H1 (cell line): ENCODE measurements at regions of chr16 and their contacts with region 1.

Region 1: GRCh38 chr16:30874821-30875717 is 18.8 kb downstream of the BCL7C start:
- DNase-seq: peak in 1 of 2 experiments; percentile 94
- H3K4me3 ChIP-seq: peak overlapping the region; percentile 61 to 97 (median 92)
- H3K27ac ChIP-seq: peak overlapping the region; percentile 77
- H3K4me1 ChIP-seq: peaks cover 0 to 6% (median 3%) of the 10 kb centered on the region in 4 experiments; a peak in 5 of 7 replicates
- H3K27me3 ChIP-seq: peaks cover 0 to 26% (median 11%) of the 10 kb centered on the region in 4 experiments; a peak in 5 of 7 replicates
- CTCF ChIP-seq: peak in 1 of 3 experiments; percentile 11; a peak in 1 of 4 replicates
- EP300 ChIP-seq: 0 out of 3 replicates have a peak, but pooled peaks of 1 of the 2 experiments have one; percentile 44
- POLR2A ChIP-seq: peak; percentile 94 to 96
- RAD21 ChIP-seq: peak in 1 of 2 experiments; percentile 9; a peak in 1 of 4 replicates

Region 2: DNA sequence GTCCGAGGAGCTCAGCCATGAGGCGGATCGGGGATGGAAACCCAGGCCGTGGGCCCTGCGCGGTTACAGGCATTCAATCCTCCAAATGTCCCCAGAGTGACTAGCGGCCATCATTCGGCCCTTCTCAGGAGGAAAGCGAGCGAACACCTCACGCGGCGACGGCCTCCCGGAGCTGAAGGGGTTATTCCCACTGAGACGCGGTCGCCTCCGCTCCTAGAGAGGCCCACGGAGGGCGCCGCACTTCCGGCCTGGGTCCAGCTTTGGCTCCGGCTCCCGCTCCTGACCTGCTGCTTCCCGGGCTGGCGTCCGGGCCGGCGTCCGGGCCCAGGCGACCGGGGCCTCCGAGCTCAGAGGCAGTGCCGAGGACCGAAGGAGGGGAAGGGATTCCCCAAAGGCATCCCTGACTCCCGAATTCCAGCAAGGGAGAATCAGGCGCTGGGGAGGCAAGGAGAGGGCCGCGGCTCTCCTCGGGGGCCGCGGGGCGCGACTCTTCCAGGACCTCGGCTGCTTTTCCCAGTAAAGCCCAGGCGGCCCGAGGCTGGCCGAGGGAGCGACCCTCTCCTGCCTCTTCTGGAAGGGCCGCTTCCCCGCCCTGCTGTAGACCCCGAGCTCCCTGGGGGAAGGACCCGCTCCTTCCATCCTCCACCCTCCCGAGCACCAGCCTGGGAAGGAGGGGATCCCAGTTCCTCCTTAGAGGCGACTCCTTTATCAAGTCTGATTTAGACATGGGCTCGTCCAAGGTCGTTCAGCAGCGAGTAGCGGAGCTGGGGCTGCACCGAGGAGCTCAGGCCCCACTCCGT is 69.5 kb before region 1 on chr16:
- CTCF ChIA-PET with region 1: interaction called, 5 read pairs
- POLR2A ChIA-PET with region 1: interaction called, 27 read pairs
- DNase-seq: peak in 1 of 2 experiments; percentile 84
- H3K4me3 ChIP-seq: peak overlapping the region; percentile 60 to 78 (median 68)
- H3K27ac ChIP-seq: no peak overlapping the region
- H3K4me1 ChIP-seq: peaks cover 0 to 6% (median 4%) of the 10 kb centered on the region in 4 experiments; a peak in 4 of 7 replicates
- H3K27me3 ChIP-seq: peaks cover 0 to 18% (median 11%) of the 10 kb centered on the region in 4 experiments; a peak in 6 of 7 replicates
- CTCF ChIP-seq: no peak
- EP300 ChIP-seq: no peak; a peak in 1 of 3 replicates
- POLR2A ChIP-seq: peak in 1 of 2 experiments; percentile 86; a peak in 2 of 3 replicates
- RAD21 ChIP-seq: no peak

Region 3: GRCh38 chr16:30853758-30854157 is 21.3 kb before region 1 on chr16:
- CTCF ChIA-PET with region 1: interaction called, 5 read pairs
- POLR2A ChIA-PET with region 1: interaction called, 14 read pairs
- DNase-seq: no peak
- H3K4me3 ChIP-seq: no peak overlapping the region
- H3K27ac ChIP-seq: no peak overlapping the region
- H3K4me1 ChIP-seq: no peaks in the 10 kb centered on the region
- H3K27me3 ChIP-seq: peaks cover 0 to 8% (median 5%) of the 10 kb centered on the region in 4 experiments; a peak in 3 of 7 replicates
- CTCF ChIP-seq: no peak
- EP300 ChIP-seq: no peak
- POLR2A ChIP-seq: no peak
- RAD21 ChIP-seq: no peak

Region 4: GRCh38 chr16:30893744-30894539 is 18.9 kb after region 1 on chr16 and contains the start of gene BCL7C:
- CTCF ChIA-PET with region 1: interaction called, 7 read pairs
- POLR2A ChIA-PET with region 1: interaction called, 40 read pairs
- DNase-seq: peak in 1 of 2 experiments; percentile 93
- H3K4me3 ChIP-seq: peak within 1 kb of the TSS; percentile 60 to 73 (median 67)
- H3K27ac ChIP-seq: no peak within 1 kb of the TSS; the same call in 1 of the 2 replicates
- H3K4me1 ChIP-seq: peaks cover 4 to 13% (median 12%) of the 10 kb centered on the region in 4 experiments
- H3K27me3 ChIP-seq: peaks cover 0 to 13% (median 7%) of the 10 kb centered on the region in 4 experiments; a peak in 5 of 7 replicates
- CTCF ChIP-seq: peak; percentile 53 to 63 (median 57)
- EP300 ChIP-seq: no peak
- POLR2A ChIP-seq: peak in 1 of 2 experiments; percentile 43; a peak in 2 of 3 replicates
- RAD21 ChIP-seq: peak in 1 of 2 experiments; percentile 45; a peak in 2 of 4 replicates
- total RNA-seq, gene BCL7C: 16.5 and 17.2 TPM in 2 replicates

Region 5: GRCh38 chr16:30902029-30902972 is 27.2 kb after region 1 on chr16:
- CTCF ChIA-PET with region 1: interaction called, 15 read pairs
- POLR2A ChIA-PET with region 1: interaction called, 23 read pairs
- DNase-seq: peak in 1 of 2 experiments; percentile 81
- H3K4me3 ChIP-seq: peak overlapping the region; percentile 42 to 67 (median 53)
- H3K27ac ChIP-seq: peak overlapping the region; percentile 18; the same call in 1 of the 2 replicates
- H3K4me1 ChIP-seq: peaks cover 2 to 5% (median 4%) of the 10 kb centered on the region in 4 experiments; a peak in 5 of 7 replicates
- H3K27me3 ChIP-seq: peaks cover 0 to 19% (median 3%) of the 10 kb centered on the region in 4 experiments; a peak in 4 of 7 replicates
- CTCF ChIP-seq: peak; percentile 43 to 72 (median 69)
- EP300 ChIP-seq: 0 out of 3 replicates have a peak, but pooled peaks of 1 of the 2 experiments have one; percentile 8
- POLR2A ChIP-seq: no peak
- RAD21 ChIP-seq: peak in 1 of 2 experiments; percentile 51; a peak in 2 of 4 replicates

Region 6: GRCh38 chr16:31032736-31033708 is 158.0 kb after region 1 on chr16 and contains the start of gene STX4:
- CTCF ChIA-PET with region 1: no interaction called
- POLR2A ChIA-PET with region 1: no interaction called
- DNase-seq: peak; percentile 89 to 98
- H3K4me3 ChIP-seq: peak within 1 kb of the TSS; percentile 67 to 94 (median 91)
- H3K27ac ChIP-seq: no peak within 1 kb of the TSS
- H3K4me1 ChIP-seq: peaks cover 0 to 4% (median 2%) of the 10 kb centered on the region in 4 experiments; a peak in 4 of 7 replicates
- H3K27me3 ChIP-seq: no peaks in the 10 kb centered on the region
- CTCF ChIP-seq: no peak
- EP300 ChIP-seq: no peak
- POLR2A ChIP-seq: no peak
- RAD21 ChIP-seq: no peak
- total RNA-seq, gene STX4: 32.3 and 39.2 TPM in 2 replicates